ENCODE measurements at regions of chr7 and their contacts with region 1.

Region 1: GRCh38 chr7:140655551-140656408 is 15.2 kb upstream of the DENND2A start:
- DNase-seq: no peak
- H3K4me3 ChIP-seq: peak overlapping the region in 2 of 3 donors; percentile 32 to 50
- H3K27ac ChIP-seq: peak overlapping the region; percentile 78 to 80
- H3K4me1 ChIP-seq: peaks cover 0 to 8% of the 10 kb centered on the region in 2 donors
- H3K27me3 ChIP-seq: no peaks in the 10 kb centered on the region
- CTCF ChIP-seq: no peak
- POLR2A ChIP-seq: no peak

Region 2: GRCh38 chr7:140526787-140527664 is 128.8 kb before region 1 on chr7:
- intact Hi-C with region 1: loop called (anchors 1 kb)
- DNase-seq: no peak
- H3K4me3 ChIP-seq: no peak overlapping the region
- H3K27ac ChIP-seq: peak overlapping the region in 1 of 2 donors; percentile 3
- H3K4me1 ChIP-seq: no peaks in the 10 kb centered on the region
- H3K27me3 ChIP-seq: no peaks in the 10 kb centered on the region
- CTCF ChIP-seq: no peak
- POLR2A ChIP-seq: no peak

Region 3: DNA sequence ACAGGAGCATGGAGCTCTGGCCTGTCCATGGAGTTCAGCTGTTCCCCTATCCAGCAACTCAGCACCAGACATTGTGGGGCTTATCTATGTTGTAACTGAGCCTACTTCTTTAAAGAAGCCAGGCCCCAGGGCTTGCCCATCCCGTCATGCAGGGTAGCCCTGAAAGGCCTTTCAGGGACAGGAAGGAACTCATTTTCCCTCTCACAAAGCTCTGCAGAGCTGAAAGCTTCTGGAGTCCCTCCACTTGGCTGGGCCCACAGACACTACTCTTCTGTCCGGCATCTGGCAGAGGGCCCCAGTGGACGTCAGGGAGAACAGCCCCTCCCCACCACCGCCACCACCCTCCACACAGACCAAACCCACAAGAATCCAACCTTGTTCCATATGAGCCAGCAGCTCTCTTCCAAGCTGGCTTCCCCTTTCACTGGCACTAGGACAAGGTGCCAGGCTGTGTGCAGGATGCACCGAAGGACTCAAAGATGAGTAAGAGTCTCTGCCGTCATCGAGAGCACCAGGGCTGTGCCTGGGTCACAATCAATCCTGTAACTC is 48.3 kb before region 1 on chr7:
- intact Hi-C with region 1: no loop called
- DNase-seq: peak in 1 of 2 donors; percentile 67
- H3K4me3 ChIP-seq: no peak overlapping the region
- H3K27ac ChIP-seq: peak overlapping the region; percentile 50 to 74
- H3K4me1 ChIP-seq: peaks cover 0 to 4% of the 10 kb centered on the region in 2 donors
- H3K27me3 ChIP-seq: no peaks in the 10 kb centered on the region
- CTCF ChIP-seq: no peak
- POLR2A ChIP-seq: no peak